ENCODE measurements at regions of chr13 and their contacts with region 1.

Region 1: DNA sequence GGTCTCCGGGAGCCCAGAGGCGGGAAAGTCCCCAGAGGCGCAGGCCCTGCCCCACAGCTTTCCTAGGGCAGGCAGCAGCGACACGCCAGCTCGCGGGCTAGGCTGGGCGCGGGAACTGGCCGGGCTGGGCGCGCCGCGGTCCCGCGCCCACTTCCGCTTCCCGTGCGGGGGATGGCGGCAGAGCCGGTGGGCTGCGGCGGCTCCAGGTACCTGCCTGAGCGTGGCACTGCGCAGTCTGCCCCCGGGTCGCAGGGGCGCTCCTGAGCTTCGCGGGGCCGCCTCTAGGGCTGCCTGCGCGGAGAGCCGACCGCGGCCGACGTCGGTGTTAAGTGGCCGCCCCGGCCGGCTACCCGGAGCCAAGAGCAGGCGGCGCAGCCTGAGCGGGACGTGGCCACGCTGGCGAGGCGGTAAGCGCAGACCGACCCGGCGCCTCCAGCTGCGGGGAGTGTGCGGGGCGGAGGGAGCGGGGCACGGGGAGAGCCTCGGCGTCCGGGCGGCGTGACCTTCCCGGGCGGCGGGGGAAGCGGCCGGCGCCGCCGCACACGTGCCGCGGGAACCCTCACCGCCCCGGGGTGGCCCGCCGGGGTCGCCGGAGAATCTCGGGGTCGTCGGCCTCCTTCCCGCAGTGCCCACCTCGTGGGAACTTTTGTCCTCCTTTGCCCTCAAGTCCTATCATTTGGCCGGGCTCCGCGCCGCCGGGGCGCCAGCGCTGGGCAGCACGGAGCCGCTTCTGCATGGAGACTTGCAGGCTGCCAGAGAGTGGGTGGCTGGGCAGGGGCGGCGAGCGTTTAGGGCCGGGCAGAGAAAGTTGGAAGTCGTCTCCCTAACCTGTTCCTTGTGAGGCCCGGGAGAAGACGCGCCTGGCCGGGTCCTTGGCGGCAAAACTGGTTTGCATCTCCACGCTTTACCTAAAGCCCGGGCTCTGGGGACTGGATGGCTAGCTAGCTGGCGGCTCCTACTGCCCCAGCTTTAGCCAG is 31.4 kb upstream of the MPHOSPH8 start:
- DNase-seq: peak; percentile 81 to 89
- H3K4me3 ChIP-seq: peak overlapping the region; percentile 81
- H3K4me3 Mint-ChIP-seq: peak overlapping the region; percentile 80
- H3K27ac Mint-ChIP-seq: peak overlapping the region; percentile 26
- H3K4me1 ChIP-seq: peaks cover 48% of the 10 kb centered on the region
- H3K4me1 Mint-ChIP-seq: peaks cover 23% of the 10 kb centered on the region
- H3K27me3 ChIP-seq: no peaks in the 10 kb centered on the region
- H3K27me3 Mint-ChIP-seq: no peaks in the 10 kb centered on the region
- CTCF ChIP-seq: peak in 1 of 2 experiments; percentile 41

Region 2: GRCh38 chr13:19633479-19634255 is 31.6 kb after region 1 on chr13 and contains the start of gene MPHOSPH8:
- CTCF ChIA-PET with region 1: interaction called, 7 read pairs
- POLR2A ChIA-PET with region 1: interaction called, 12 read pairs
- intact Hi-C with region 1: loop called (anchors 1 kb)
- DNase-seq: peak; percentile 97 to 98
- H3K4me3 ChIP-seq: peak within 1 kb of the TSS; percentile 69
- H3K4me3 Mint-ChIP-seq: peak within 1 kb of the TSS; percentile 92
- H3K27ac Mint-ChIP-seq: peak within 1 kb of the TSS; percentile 91
- H3K4me1 ChIP-seq: peaks cover 7% of the 10 kb centered on the region; the same call in 1 of the 2 replicates
- H3K4me1 Mint-ChIP-seq: peaks cover 5% of the 10 kb centered on the region
- H3K27me3 ChIP-seq: no peaks in the 10 kb centered on the region
- H3K27me3 Mint-ChIP-seq: no peaks in the 10 kb centered on the region
- CTCF ChIP-seq: no peak
- total RNA-seq, gene MPHOSPH8: 31.6 and 31.8 TPM in 2 replicates

Region 3: DNA sequence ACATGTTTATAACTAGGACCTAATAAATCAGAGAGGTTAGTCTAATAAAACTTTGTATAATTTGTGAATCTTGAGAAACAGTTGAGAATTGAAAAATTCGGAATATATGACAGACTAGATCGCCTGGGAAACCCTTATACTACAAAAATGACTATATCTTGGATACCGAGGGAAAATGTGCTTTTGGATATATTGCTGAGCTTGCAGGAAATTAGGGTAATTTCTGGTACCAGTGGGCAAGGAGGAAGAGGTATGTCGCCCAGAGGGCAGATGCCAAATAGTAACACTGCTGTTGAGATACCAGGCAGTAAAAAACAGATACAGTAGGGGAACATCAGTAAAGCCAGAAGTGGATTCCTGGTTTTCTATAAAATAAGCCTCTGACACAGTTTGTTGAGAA is 48.7 kb after region 1 on chr13:
- CTCF ChIA-PET with region 1: no interaction called
- POLR2A ChIA-PET with region 1: no interaction called
- intact Hi-C with region 1: no loop called
- DNase-seq: no peak
- H3K4me3 ChIP-seq: no peak overlapping the region
- H3K4me3 Mint-ChIP-seq: no peak overlapping the region
- H3K27ac Mint-ChIP-seq: no peak overlapping the region
- H3K4me1 ChIP-seq: no peaks in the 10 kb centered on the region
- H3K4me1 Mint-ChIP-seq: no peaks in the 10 kb centered on the region
- H3K27me3 ChIP-seq: no peaks in the 10 kb centered on the region
- H3K27me3 Mint-ChIP-seq: no peaks in the 10 kb centered on the region
- CTCF ChIP-seq: no peak

Region 4: GRCh38 chr13:19673473-19674430 is 71.7 kb after region 1 on chr13:
- CTCF ChIA-PET with region 1: no interaction called
- POLR2A ChIA-PET with region 1: no interaction called
- intact Hi-C with region 1: loop called (anchors 5 kb)
- DNase-seq: no peak
- H3K4me3 ChIP-seq: no peak overlapping the region
- H3K4me3 Mint-ChIP-seq: no peak overlapping the region
- H3K27ac Mint-ChIP-seq: no peak overlapping the region
- H3K4me1 ChIP-seq: no peaks in the 10 kb centered on the region
- H3K4me1 Mint-ChIP-seq: no peaks in the 10 kb centered on the region
- H3K27me3 ChIP-seq: no peaks in the 10 kb centered on the region
- H3K27me3 Mint-ChIP-seq: no peaks in the 10 kb centered on the region
- CTCF ChIP-seq: no peak

Region 5: DNA sequence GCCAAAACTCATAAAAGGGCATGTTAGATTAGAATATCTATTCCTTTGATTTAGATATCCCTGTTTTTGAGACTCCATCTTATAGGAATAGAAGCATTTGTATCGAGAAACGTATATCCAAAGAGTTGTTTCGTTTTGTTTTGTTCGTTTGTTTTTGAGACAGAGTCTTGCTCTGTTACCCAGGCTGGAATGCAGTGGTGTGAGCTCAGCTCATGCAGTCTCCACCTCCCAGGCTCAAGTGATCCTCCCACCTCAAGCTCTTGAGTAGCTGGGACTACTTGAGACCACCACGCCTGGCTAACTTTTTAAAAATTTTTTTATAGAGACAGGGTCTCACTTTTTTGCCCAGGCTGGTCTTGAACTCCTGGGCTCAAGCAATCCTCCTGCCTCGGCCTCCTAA is 288.0 kb after region 1 on chr13:
- CTCF ChIA-PET with region 1: no interaction called
- POLR2A ChIA-PET with region 1: no interaction called
- intact Hi-C with region 1: no loop called
- DNase-seq: no peak
- H3K4me3 ChIP-seq: no peak overlapping the region
- H3K4me3 Mint-ChIP-seq: no peak overlapping the region
- H3K27ac Mint-ChIP-seq: no peak overlapping the region
- H3K4me1 ChIP-seq: no peaks in the 10 kb centered on the region
- H3K4me1 Mint-ChIP-seq: no peaks in the 10 kb centered on the region
- H3K27me3 ChIP-seq: no peaks in the 10 kb centered on the region
- H3K27me3 Mint-ChIP-seq: no peaks in the 10 kb centered on the region
- CTCF ChIP-seq: no peak

Region 6: DNA sequence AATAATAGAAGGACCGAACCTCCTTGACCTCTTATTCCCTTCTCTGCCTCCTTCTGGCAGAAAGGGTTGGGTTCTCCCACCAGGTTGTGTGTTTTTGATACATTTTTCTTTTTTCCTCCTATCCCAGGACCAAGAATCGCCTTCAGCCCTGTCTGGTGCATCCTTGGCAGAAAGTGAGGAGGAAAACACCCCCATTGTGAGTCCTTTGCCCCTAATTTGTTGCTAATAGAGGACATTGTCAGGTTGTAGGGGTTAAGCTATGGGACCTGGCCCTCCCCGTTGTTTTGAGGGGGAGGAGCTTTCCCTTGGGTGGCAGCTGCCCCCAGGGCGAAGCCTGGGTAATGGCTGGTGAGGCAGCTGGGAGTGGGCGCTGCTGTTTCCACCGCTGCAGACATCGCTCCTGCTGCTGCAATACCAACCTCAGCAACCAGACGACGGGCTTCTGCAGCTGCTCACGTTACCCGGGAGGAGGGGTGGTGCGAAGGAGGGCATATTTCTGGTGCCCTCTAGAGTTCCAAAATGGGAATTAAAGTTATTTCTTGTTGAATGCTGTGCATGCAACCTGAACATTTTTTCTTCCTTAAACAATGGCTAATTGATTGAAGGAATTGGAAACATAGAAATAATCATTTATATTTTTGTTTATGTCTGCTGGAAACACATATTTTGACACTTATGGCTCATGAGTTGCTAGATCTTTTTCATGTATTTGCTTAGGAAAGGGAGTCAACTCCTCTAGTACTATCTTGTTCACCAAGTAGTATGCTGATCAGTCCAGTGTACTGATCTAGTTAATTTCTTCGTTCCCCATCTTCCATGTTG is 358.0 kb after region 1 on chr13:
- CTCF ChIA-PET with region 1: no interaction called
- POLR2A ChIA-PET with region 1: no interaction called
- intact Hi-C with region 1: loop called (anchors 10 kb)
- DNase-seq: peak; percentile 91 to 94
- H3K4me3 ChIP-seq: peak overlapping the region; percentile 91
- H3K4me3 Mint-ChIP-seq: peak overlapping the region; percentile 99
- H3K27ac Mint-ChIP-seq: peak overlapping the region; percentile 96
- H3K4me1 ChIP-seq: peaks cover 5% of the 10 kb centered on the region
- H3K4me1 Mint-ChIP-seq: peaks cover 7% of the 10 kb centered on the region
- H3K27me3 ChIP-seq: no peaks in the 10 kb centered on the region
- H3K27me3 Mint-ChIP-seq: no peaks in the 10 kb centered on the region
- CTCF ChIP-seq: peak; percentile 79 to 93

Region 7: GRCh38 chr13:20270163-20270865 is 668.3 kb after region 1 on chr13:
- CTCF ChIA-PET with region 1: no interaction called
- POLR2A ChIA-PET with region 1: no interaction called
- intact Hi-C with region 1: no loop called
- DNase-seq: no peak
- H3K4me3 ChIP-seq: no peak overlapping the region
- H3K4me3 Mint-ChIP-seq: no peak overlapping the region
- H3K27ac Mint-ChIP-seq: no peak overlapping the region
- H3K4me1 ChIP-seq: 0 out of 2 replicates have a peak, but pooled peaks cover 4% of the 10 kb centered on the region
- H3K4me1 Mint-ChIP-seq: no peaks in the 10 kb centered on the region
- H3K27me3 ChIP-seq: 0 out of 2 replicates have a peak, but pooled peaks cover 2% of the 10 kb centered on the region
- H3K27me3 Mint-ChIP-seq: peaks cover 8% of the 10 kb centered on the region
- CTCF ChIP-seq: no peak

Region 8: GRCh38 chr13:20301403-20302071 is 699.5 kb after region 1 on chr13:
- CTCF ChIA-PET with region 1: no interaction called
- POLR2A ChIA-PET with region 1: no interaction called
- intact Hi-C with region 1: no loop called
- DNase-seq: no peak
- H3K4me3 ChIP-seq: no peak overlapping the region
- H3K4me3 Mint-ChIP-seq: no peak overlapping the region
- H3K27ac Mint-ChIP-seq: no peak overlapping the region
- H3K4me1 ChIP-seq: peaks cover 6% of the 10 kb centered on the region
- H3K4me1 Mint-ChIP-seq: no peaks in the 10 kb centered on the region
- H3K27me3 ChIP-seq: peaks cover 4% of the 10 kb centered on the region
- H3K27me3 Mint-ChIP-seq: peaks cover 9% of the 10 kb centered on the region
- CTCF ChIP-seq: no peak

Measured in Caco-2 (cell line).